Endothelial cell of umbilical vein (primary cell): ENCODE measurements at regions of chr19 and their contacts with region 1.

Region 1: GRCh38 chr19:40633207-40633606 is 32.0 kb downstream of the LTBP4 start:
- DNase-seq: no peak
- H3K4me3 ChIP-seq: no peak overlapping the region
- H3K27ac ChIP-seq: no peak overlapping the region
- H3K4me1 ChIP-seq: no peaks in the 10 kb centered on the region
- H3K27me3 ChIP-seq: peaks cover 0 to 4% of the 10 kb centered on the region in 2 experiments
- CTCF ChIP-seq: no peak
- POLR2A ChIP-seq: no peak

Region 2: DNA sequence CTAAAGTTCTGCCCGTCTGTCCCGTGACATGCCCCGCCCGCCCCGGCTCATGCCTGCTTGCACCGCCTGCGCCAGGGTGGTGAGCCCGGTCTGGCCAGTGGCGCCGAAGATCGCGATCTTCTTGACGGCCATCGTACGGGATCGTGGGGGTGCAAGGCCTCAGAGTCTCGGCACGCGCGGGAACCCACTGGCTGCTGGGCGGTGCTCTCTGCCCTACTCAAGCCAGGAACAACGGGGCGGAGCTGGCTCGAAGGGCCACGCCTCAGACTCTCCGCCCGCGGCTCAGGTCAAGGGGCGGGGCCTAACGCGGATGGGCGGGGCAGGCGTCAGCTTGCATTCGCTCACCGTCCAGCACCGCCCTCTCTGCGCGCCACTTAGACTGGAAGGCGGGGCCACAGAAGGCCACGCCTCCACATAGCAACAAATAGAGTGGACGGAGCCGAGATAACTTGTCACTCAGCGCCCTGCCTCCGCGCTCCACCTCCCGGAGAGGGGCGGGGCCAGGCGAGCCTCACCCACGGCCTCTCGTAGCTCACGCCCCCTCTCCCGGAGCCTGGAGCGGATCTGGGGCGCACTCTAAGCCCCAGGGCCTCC is 167.6 kb before region 1 on chr19 and contains the start of gene BLVRB:
- CTCF ChIA-PET with region 1: interaction called, 32 read pairs
- POLR2A ChIA-PET with region 1: no interaction called
- dilution Hi-C with region 1: no loop called
- intact Hi-C with region 1: loop called (anchors 1 kb)
- DNase-seq: peak; percentile 100
- H3K4me3 ChIP-seq: peak within 1 kb of the TSS; percentile 14 to 69 (median 49)
- H3K27ac ChIP-seq: peak within 1 kb of the TSS; percentile 47
- H3K4me1 ChIP-seq: peaks cover 14% of the 10 kb centered on the region
- H3K27me3 ChIP-seq: peaks cover 2 to 5% of the 10 kb centered on the region in 2 experiments
- CTCF ChIP-seq: no peak
- POLR2A ChIP-seq: no peak
- total RNA-seq, gene BLVRB: 30.8 and 35.8 TPM in 2 replicates

Region 3: DNA sequence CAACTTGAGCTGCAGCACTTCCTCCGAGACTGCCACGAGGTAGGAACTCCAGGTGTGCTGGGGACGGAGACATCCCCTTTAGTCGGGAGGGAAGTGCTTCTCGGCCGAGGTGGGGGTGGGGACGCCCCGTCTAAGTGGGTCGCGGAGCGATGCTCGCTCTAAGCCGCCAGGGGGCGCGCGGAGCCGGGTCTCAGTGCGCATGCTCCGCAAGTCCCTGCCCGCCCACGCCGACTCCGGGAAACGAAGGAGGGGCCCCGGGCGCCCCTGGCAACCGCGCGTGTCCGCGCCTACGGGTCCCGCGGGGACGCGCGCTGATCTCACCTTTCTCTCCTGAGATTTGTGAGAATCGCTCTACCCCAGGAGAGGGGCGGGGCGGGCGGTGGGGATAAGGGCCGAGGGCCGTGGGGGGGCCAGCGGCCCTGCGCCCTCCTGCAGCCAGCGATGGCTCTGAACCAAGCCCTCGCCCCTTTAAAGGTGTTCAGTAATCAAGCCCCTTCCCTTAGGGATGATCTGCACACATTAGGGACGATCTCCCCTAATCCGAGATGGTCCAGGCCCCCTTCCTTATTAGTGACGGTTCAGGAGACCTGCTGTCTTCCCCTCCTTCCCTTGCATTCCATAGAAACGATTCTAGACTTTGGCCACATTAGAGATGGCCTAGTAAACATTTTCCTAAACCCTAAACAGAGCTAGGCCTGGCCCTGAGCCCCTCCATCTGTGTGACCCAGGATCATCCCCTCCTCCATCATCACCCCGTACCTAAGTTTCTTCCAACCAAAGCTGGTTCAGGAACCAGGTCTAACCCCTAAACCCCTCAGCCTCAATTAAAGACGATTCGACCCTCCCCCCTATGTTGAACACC is 103.9 kb before region 1 on chr19:
- CTCF ChIA-PET with region 1: interaction called, 25 read pairs
- POLR2A ChIA-PET with region 1: no interaction called
- dilution Hi-C with region 1: no loop called
- intact Hi-C with region 1: loop called (anchors 1 kb)
- DNase-seq: peak; percentile 87
- H3K4me3 ChIP-seq: peak overlapping the region in 1 of 3 experiments; percentile 27
- H3K27ac ChIP-seq: no peak overlapping the region
- H3K4me1 ChIP-seq: no peaks in the 10 kb centered on the region
- H3K27me3 ChIP-seq: peaks cover 2 to 6% of the 10 kb centered on the region in 2 experiments
- CTCF ChIP-seq: peak; percentile 93 to 98
- POLR2A ChIP-seq: no peak

Region 4: GRCh38 chr19:40549007-40549708 is 84.0 kb before region 1 on chr19:
- CTCF ChIA-PET with region 1: interaction called, 48 read pairs
- POLR2A ChIA-PET with region 1: no interaction called
- dilution Hi-C with region 1: no loop called
- intact Hi-C with region 1: no loop called
- DNase-seq: peak; percentile 42
- H3K4me3 ChIP-seq: no peak overlapping the region
- H3K27ac ChIP-seq: no peak overlapping the region
- H3K4me1 ChIP-seq: no peaks in the 10 kb centered on the region
- H3K27me3 ChIP-seq: peaks cover 14 to 16% of the 10 kb centered on the region in 2 experiments
- CTCF ChIP-seq: peak; percentile 7 to 67
- POLR2A ChIP-seq: no peak

Region 5: GRCh38 chr19:40609561-40610395 is 23.4 kb before region 1 on chr19:
- CTCF ChIA-PET with region 1: interaction called, 126 read pairs
- POLR2A ChIA-PET with region 1: no interaction called
- dilution Hi-C with region 1: no loop called
- intact Hi-C with region 1: loop called (anchors 1 kb)
- DNase-seq: peak; percentile 61
- H3K4me3 ChIP-seq: peak overlapping the region in 2 of 3 experiments; percentile 8 to 33
- H3K27ac ChIP-seq: no peak overlapping the region
- H3K4me1 ChIP-seq: peaks cover 32% of the 10 kb centered on the region
- H3K27me3 ChIP-seq: no peaks in the 10 kb centered on the region
- CTCF ChIP-seq: no peak
- POLR2A ChIP-seq: peak; percentile 30

Region 6: DNA sequence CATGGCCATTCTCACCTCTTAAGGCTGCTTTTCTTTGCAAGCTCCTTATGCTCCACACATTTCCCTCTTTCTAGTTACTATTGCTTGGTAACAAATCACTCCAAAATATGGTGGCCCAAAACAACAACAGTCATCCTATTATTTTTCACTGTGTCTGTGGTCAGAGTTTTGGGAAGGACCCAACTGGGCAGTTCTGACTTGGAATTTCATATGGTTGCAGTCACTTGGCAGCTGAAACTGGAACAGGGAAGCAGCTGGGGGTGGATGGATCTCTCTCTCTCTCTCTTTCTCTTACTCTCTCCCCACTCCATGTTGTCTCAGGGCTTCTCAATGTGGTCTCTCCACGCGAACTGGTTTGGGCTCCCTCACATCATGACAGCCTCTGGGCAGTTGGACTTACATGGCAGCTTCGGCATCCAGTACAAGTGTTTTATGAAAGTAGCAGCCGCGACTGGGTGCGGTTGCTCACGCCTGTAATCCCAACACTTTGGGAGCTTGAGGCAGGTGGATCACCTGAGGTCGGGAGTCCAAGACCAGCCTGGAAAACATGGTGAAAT is 17.6 kb after region 1 on chr19:
- CTCF ChIA-PET with region 1: interaction called, 81 read pairs
- POLR2A ChIA-PET with region 1: no interaction called
- dilution Hi-C with region 1: no loop called
- intact Hi-C with region 1: no loop called
- DNase-seq: no peak
- H3K4me3 ChIP-seq: no peak overlapping the region
- H3K27ac ChIP-seq: no peak overlapping the region
- H3K4me1 ChIP-seq: peaks cover 11% of the 10 kb centered on the region
- H3K27me3 ChIP-seq: no peaks in the 10 kb centered on the region
- CTCF ChIP-seq: no peak
- POLR2A ChIP-seq: no peak